ENCODE measurements at regions of chr9 and their contacts with region 1.

Region 1: GRCh38 chr9:128034821-128035764 is 32.0 kb downstream of the NAIF1 start:
- DNase-seq: peak; percentile 72 to 83
- H3K4me3 ChIP-seq: no peak overlapping the region
- H3K27ac ChIP-seq: peak overlapping the region in 1 of 2 donors; percentile 23
- H3K4me1 ChIP-seq: no peaks in the 10 kb centered on the region
- H3K27me3 ChIP-seq: no peaks in the 10 kb centered on the region
- CTCF ChIP-seq: peak; percentile 86 to 98 (median 95)
- POLR2A ChIP-seq: no peak

Region 2: GRCh38 chr9:128117613-128118471 is 82.7 kb after region 1 on chr9:
- intact Hi-C with region 1: loop called (anchors 10 kb)
- DNase-seq: peak; percentile 94 to 95
- H3K4me3 ChIP-seq: no peak overlapping the region
- H3K27ac ChIP-seq: peak overlapping the region; percentile 12 to 28
- H3K4me1 ChIP-seq: no peaks in the 10 kb centered on the region
- H3K27me3 ChIP-seq: no peaks in the 10 kb centered on the region
- CTCF ChIP-seq: peak; percentile 100
- POLR2A ChIP-seq: peak in 1 of 2 donors; percentile 35

Measured in uterus (tissue), 4 donors.